Activated naive CD4-positive, alpha-beta T cell treated with anti-CD3 and anti-CD28 coated beads for 36 hours (primary cell): ENCODE measurements at regions of chrX and their contacts with region 1.

Region 1: DNA sequence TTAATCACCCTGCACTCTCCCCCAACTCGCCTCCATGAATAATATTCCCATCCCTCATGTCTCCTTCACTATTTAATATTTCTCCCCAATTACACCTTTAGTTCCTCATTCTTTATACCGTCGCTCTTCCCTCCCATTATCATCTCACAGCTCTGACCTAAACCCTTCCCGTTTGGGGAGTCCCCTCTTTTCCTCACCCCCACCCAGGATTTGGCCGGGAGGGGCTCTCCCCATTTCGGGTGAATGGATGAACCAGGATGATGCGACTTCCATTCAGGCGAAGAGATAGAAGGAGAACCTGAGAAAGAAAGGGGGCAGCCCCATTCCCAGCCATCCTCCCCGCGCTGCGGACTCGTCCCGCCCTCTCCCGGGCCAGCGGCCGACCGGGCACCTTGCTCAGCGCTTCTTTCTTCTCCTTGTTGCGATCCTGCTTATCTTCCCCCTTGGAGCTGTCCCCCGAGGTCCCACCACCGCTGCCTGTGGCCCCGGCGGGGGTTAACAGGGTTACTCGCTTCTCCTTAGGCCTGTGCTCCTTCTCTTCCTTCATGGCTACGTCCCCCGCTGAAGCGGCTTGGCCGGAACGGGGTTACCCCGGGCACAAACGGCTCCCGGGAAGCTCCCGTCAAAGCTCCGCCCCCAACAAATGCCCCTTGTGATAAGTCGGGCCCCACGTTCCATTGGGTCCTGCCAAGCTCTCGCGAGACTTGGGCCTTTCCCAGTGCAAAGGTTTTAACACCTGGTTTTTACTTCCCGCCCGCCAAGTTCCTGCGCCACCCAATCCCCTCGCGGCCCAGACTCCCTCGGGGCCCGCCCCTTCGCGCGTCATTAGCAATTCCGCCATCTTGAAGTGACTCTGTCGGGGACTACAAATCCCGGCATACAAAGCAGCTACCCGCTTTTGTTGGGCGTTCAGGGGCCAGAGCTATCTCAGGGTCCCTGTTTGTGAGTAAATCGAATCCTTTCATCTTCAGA is at the start of gene UPF3B:
- DNase-seq: peak; percentile 97
- H3K4me3 Mint-ChIP-seq: peak within 1 kb of the TSS; percentile 98
- H3K27ac Mint-ChIP-seq: peak within 1 kb of the TSS; percentile 97
- H3K4me1 Mint-ChIP-seq: peaks cover 8% of the 10 kb centered on the region
- H3K27me3 Mint-ChIP-seq: no peaks in the 10 kb centered on the region
- total RNA-seq, gene UPF3B: 21.5 to 22.2 TPM

Region 2: DNA sequence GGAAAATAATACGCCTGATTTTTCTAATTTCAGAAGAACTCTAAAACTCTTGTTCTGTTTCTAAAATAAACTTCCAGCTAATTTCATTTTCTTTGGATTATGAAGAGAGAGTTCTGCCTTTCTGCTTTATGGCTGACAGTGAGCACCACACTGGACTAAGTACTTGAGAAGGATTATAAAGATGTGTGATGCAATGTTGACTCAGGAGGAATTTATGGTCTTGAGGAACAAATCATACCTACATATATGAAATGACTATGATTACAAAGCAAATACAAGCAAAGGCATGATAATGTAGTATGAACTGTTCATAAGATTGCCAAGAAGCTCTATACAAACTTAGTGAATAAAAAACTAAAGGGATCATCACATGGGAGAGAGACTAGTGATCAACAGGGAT is 397.4 kb before region 1 on chrX:
- CTCF ChIA-PET with region 1: no interaction called
- intact Hi-C with region 1: no loop called
- DNase-seq: no peak
- H3K4me3 Mint-ChIP-seq: no peak overlapping the region
- H3K27ac Mint-ChIP-seq: no peak overlapping the region
- H3K4me1 Mint-ChIP-seq: no peaks in the 10 kb centered on the region
- H3K27me3 Mint-ChIP-seq: no peaks in the 10 kb centered on the region

Region 3: GRCh38 chrX:119565107-119565663 is 287.5 kb before region 1 on chrX and contains the start of gene STEEP1:
- CTCF ChIA-PET with region 1: no interaction called
- intact Hi-C with region 1: loop called (anchors 2 kb)
- DNase-seq: peak; percentile 95
- H3K4me3 Mint-ChIP-seq: peak within 1 kb of the TSS; percentile 95
- H3K27ac Mint-ChIP-seq: peak within 1 kb of the TSS; percentile 89
- H3K4me1 Mint-ChIP-seq: peaks cover 20% of the 10 kb centered on the region
- H3K27me3 Mint-ChIP-seq: no peaks in the 10 kb centered on the region
- total RNA-seq, gene STEEP1: 19.6 to 20.7 TPM

Region 4: GRCh38 chrX:119826399-119826959 is 26.2 kb before region 1 on chrX:
- CTCF ChIA-PET with region 1: no interaction called
- intact Hi-C with region 1: loop called (anchors 1 kb)
- DNase-seq: peak; percentile 38
- H3K4me3 Mint-ChIP-seq: no peak overlapping the region
- H3K27ac Mint-ChIP-seq: peak overlapping the region; percentile 30
- H3K4me1 Mint-ChIP-seq: peaks cover 18% of the 10 kb centered on the region
- H3K27me3 Mint-ChIP-seq: no peaks in the 10 kb centered on the region

Region 5: GRCh38 chrX:119871599-119872395 is 19.1 kb after region 1 on chrX and contains the starts of genes NDUFA1 and RNF113A:
- CTCF ChIA-PET with region 1: interaction called, 4 read pairs
- intact Hi-C with region 1: loop called (anchors 1 kb)
- DNase-seq: peak; percentile 86
- H3K4me3 Mint-ChIP-seq: peak within 1 kb of the TSS; percentile 97
- H3K27ac Mint-ChIP-seq: peak within 1 kb of the TSS; percentile 98
- H3K4me1 Mint-ChIP-seq: peaks cover 13% of the 10 kb centered on the region
- H3K27me3 Mint-ChIP-seq: no peaks in the 10 kb centered on the region
- total RNA-seq, gene NDUFA1: 105 to 107 TPM
- total RNA-seq, gene RNF113A: 20.8 to 22.0 TPM

Region 6: GRCh38 chrX:119943185-119943988 is 90.7 kb after region 1 on chrX and contains the start of gene NKAP:
- CTCF ChIA-PET with region 1: no interaction called
- intact Hi-C with region 1: loop called (anchors 1 kb)
- DNase-seq: peak; percentile 86
- H3K4me3 Mint-ChIP-seq: peak within 1 kb of the TSS; percentile 98
- H3K27ac Mint-ChIP-seq: peak within 1 kb of the TSS; percentile 95
- H3K4me1 Mint-ChIP-seq: peaks cover 23% of the 10 kb centered on the region
- H3K27me3 Mint-ChIP-seq: no peaks in the 10 kb centered on the region
- total RNA-seq, gene NKAP: 12.3 to 12.7 TPM